ENCODE measurements at regions of chr7 and their contacts with region 1.

Region 1: DNA sequence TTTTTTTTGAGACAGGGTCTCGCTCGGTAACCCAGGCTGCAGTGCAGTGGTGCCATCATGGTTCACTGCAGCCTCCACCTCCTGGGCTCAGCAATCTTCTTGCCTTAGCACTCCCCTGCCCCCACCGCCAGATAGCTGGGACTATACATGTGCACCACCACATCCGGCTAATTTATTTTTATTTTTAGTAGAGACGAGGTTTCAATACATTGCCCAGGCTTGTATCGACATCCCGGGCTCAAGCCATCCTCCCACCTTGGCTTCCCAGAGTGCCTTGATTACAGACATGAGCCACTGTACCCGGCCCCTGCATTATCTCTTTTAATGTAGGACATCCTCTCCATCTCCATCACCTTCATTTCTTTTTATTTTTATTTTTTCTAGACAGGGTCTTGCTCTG is 213.3 kb downstream of the CUX1 start:
- DNase-seq: no peak
- ATAC-seq: no peak
- H3K4me3 ChIP-seq: no peak overlapping the region
- H3K27ac ChIP-seq: no peak overlapping the region
- H3K4me1 ChIP-seq: no peaks in the 10 kb centered on the region
- H3K27me3 ChIP-seq: no peaks in the 10 kb centered on the region
- CTCF ChIP-seq: no peak
- POLR2A ChIP-seq: no peak
- RAD21 ChIP-seq: no peak

Region 2: DNA sequence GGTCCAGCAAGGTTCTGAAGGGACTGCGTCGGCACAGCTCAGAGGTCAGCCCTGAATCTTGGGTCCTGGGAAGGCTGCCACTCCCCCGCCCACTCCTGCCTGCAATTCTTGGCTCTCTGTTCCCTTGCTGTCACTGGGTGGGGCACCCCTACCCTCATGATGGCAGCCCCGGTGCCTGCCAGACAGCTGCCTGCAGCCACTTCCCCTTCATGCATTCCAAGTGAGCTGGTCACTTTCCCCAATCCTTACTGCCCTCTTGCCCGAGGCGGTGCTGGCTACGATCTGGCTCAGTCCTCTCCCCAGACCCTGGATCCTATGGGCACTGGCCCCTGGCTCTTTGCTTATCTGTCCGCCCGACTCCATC is 415.8 kb before region 1 on chr7:
- CTCF ChIA-PET with region 1: no interaction called
- POLR2A ChIA-PET with region 1: no interaction called
- dilution Hi-C with region 1: no loop called
- in situ Hi-C with region 1: no loop called
- intact Hi-C with region 1: no loop called
- DNase-seq: no peak
- ATAC-seq: peak; percentile 35; the same call in 1 of the 2 replicates
- H3K4me3 ChIP-seq: no peak overlapping the region
- H3K27ac ChIP-seq: no peak overlapping the region
- H3K4me1 ChIP-seq: no peaks in the 10 kb centered on the region; the same call in 1 of the 2 replicates
- H3K27me3 ChIP-seq: peaks cover 48% of the 10 kb centered on the region
- CTCF ChIP-seq: no peak
- POLR2A ChIP-seq: no peak
- RAD21 ChIP-seq: no peak

Region 3: DNA sequence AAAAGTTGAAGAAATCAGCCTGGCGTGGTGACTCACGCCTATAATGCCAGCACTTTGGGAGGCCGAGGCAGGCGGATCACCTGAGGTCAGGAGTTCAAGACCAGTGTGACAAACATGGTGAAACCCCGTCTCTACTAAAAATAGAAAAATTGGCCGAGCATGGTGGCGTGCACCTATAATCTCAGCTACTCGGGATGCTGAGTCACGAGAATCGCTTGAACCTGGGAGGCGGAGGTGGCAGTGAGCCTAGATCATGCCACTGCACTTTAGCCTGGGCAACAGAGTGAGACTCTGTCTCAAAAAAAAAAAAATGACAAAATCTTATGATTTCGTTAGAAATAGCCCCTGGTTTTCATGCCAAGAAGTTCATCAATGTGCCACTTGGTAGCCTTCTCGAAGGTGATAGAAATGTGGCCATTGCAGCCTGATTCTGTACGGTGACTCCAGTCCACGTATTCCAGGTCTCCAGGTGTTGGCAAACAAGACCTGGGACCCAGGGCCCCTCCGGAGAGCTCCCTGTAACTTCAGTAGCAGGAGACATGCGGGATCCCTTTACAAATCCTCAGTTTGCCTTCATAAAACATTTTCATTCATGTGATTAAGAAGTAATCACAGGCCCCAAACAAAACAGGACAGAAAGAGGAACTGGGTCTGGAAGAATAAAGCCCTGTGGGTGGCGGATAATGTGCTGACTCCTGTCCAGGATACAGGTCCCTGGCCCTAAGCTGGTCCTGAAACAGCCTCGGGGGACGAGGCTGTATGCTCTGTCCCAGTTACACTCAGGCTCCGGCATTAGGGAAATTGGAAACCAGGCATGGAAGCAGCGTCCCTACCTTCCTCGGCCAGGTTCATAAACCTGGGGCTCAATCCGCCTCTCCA is 48.7 kb after region 1 on chr7:
- CTCF ChIA-PET with region 1: no interaction called
- POLR2A ChIA-PET with region 1: no interaction called
- dilution Hi-C with region 1: no loop called
- in situ Hi-C with region 1: no loop called
- intact Hi-C with region 1: loop called (anchors 10 kb)
- DNase-seq: no peak
- ATAC-seq: no peak
- H3K4me3 ChIP-seq: no peak overlapping the region
- H3K27ac ChIP-seq: no peak overlapping the region
- H3K4me1 ChIP-seq: no peaks in the 10 kb centered on the region
- H3K27me3 ChIP-seq: no peaks in the 10 kb centered on the region
- CTCF ChIP-seq: no peak
- POLR2A ChIP-seq: no peak
- RAD21 ChIP-seq: no peak

Measured in IMR-90 (cell line).